Body of pancreas (tissue), 4 donors: ENCODE measurements at regions of chr15 and their contacts with region 1.

Region 1: GRCh38 chr15:44738340-44738984 is 2.1 kb downstream of the TRIM69 start:
- DNase-seq: no peak
- ATAC-seq: peak; percentile 74
- H3K4me3 ChIP-seq: no peak overlapping the region
- H3K27ac ChIP-seq: no peak overlapping the region
- H3K4me1 ChIP-seq: no peaks in the 10 kb centered on the region
- H3K27me3 ChIP-seq: no peaks in the 10 kb centered on the region
- CTCF ChIP-seq: peak; percentile 51 to 88 (median 77)
- POLR2A ChIP-seq: no peak

Region 2: GRCh38 chr15:44593042-44593736 is 145.3 kb before region 1 on chr15:
- intact Hi-C with region 1: loop called (anchors 10 kb)
- DNase-seq: no peak
- ATAC-seq: no peak
- H3K4me3 ChIP-seq: no peak overlapping the region
- H3K27ac ChIP-seq: no peak overlapping the region
- H3K4me1 ChIP-seq: peaks cover 5% of the 10 kb centered on the region
- H3K27me3 ChIP-seq: no peaks in the 10 kb centered on the region
- CTCF ChIP-seq: peak; percentile 11 to 47 (median 26)
- POLR2A ChIP-seq: no peak

Region 3: GRCh38 chr15:44666210-44667038 is 72.0 kb before region 1 on chr15:
- intact Hi-C with region 1: loop called (anchors 5 kb)
- DNase-seq: no peak
- ATAC-seq: no peak
- H3K4me3 ChIP-seq: no peak overlapping the region
- H3K27ac ChIP-seq: no peak overlapping the region
- H3K4me1 ChIP-seq: peaks cover 15% of the 10 kb centered on the region
- H3K27me3 ChIP-seq: no peaks in the 10 kb centered on the region
- CTCF ChIP-seq: no peak
- POLR2A ChIP-seq: no peak